ENCODE measurements at regions of chr13 and their contacts with region 1.

Region 1: DNA sequence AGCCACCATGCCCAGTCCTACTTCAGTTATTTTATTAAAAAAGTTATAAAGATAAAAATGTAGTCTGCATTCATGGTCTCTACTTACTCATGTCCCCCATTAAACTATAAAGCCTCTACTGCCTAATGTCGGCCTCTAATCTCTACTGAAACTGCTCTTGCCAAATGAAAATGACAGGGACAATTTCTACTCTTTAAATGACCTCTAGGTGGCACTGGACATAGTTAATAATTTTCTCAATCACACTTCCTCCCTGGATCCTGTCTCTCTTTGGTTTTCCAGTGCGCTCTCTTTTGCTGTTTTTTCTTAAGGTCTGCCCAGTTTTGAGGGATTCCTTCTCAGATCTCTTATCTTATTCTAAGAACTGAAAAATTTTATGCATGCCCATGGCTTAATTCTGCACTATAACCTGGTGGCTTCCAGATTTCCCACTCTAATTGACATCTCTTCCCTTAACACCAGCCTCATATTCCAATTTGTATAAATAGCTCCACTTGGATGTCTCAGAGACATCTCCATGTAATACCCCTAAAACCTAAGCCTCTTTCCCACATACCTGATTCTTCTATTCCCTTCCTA is 54.3 kb downstream of the MTMR6 start:
- DNase-seq: peak; percentile 65
- ATAC-seq: peak; percentile 73
- H3K4me3 ChIP-seq: no peak overlapping the region
- H3K27ac ChIP-seq: no peak overlapping the region
- H3K4me1 ChIP-seq: no peaks in the 10 kb centered on the region
- H3K27me3 ChIP-seq: peaks cover 14% of the 10 kb centered on the region; the same call in 1 of the 2 replicates
- CTCF ChIP-seq: peak; percentile 69

Region 2: DNA sequence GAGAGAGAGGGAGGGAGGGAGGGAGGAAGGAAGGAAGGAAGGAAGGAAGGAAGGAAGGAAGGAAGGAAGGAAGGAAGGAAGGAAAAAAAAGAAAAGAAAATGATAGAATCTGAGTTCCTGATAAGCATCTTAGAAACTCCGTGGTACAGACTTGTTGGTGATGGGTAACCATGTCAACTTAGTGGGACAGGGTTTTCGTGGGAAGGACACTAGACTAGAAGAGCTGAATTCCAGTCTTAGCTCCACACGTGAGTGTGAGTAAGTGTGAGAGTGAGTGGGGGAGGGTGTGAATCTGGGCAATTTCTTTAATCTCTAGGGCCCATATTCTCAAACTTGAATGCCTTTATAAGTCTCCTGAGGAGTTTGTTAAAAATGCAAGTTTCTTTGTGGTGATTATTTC is 102.1 kb before region 1 on chr13:
- CTCF ChIA-PET with region 1: no interaction called
- POLR2A ChIA-PET with region 1: no interaction called
- intact Hi-C with region 1: no loop called
- DNase-seq: no peak
- ATAC-seq: no peak
- H3K4me3 ChIP-seq: no peak overlapping the region
- H3K27ac ChIP-seq: no peak overlapping the region
- H3K4me1 ChIP-seq: no peaks in the 10 kb centered on the region
- H3K27me3 ChIP-seq: peaks cover 24% of the 10 kb centered on the region
- CTCF ChIP-seq: no peak

Region 3: DNA sequence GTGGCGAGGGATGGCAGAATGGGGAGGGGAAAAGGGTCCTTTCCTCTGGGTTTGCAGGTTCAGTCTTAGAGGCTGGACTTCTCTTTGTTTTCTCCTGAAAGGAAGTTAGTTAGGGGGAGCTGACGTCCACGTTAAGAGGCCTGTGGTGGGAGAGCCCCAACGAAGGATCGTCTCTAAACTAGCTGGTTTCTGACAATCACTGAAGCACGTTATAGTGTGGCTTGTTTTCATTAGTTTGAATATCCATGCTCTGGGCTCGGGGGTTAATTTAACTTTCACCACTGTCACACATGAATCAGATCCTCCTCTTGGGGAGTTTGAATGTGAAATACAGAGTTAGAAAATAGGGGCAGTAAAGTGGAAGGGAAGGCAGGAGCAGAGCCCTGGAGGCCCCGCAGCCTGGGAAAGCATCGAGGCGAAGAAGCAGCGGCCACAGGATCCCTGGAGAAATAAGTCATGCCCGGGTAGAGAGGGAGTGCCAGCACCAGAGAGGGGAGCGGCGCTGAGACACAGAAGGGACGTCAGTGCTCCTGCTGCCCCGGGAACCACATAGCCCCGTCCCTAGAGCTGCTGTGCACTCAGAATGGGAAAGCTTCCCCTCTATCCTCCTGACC is 29.8 kb before region 1 on chr13:
- CTCF ChIA-PET with region 1: no interaction called
- POLR2A ChIA-PET with region 1: no interaction called
- intact Hi-C with region 1: no loop called
- DNase-seq: no peak
- ATAC-seq: no peak
- H3K4me3 ChIP-seq: no peak overlapping the region
- H3K27ac ChIP-seq: no peak overlapping the region
- H3K4me1 ChIP-seq: no peaks in the 10 kb centered on the region
- H3K27me3 ChIP-seq: peaks cover 59% of the 10 kb centered on the region
- CTCF ChIP-seq: no peak

Region 4: DNA sequence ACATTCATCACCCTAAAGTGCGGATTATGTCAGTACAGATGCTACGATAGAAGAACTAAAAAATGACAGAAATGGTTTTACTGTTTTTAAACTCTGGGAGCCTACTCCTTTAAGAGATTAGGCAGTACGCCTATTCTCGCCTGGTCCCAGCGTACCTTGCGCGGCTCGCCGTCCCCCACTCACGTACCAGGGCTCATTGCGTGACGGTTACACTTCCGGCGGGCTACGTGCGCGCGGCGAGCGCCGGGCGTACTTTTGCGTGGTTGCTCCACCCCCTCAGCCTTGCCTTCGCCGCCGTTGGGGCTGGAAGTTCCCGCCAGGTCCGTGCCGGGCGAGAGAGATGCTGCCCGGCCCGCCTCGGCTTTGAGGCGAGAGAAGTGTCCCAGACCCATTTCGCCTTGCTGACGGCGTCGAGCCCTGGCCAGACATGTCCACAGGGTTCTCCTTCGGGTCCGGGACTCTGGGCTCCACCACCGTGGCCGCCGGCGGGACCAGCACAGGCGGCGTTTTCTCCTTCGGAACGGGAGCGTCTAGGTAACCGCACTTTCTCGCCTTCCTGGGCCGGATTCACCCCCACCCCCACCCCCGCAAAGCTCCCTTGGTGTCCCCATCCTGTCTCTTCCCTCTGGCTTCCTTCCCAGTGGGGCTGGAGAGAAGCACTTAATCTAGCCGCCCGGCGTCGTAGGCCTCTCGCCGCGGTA is 68.5 kb after region 1 on chr13 and contains the start of gene NUP58:
- CTCF ChIA-PET with region 1: no interaction called
- POLR2A ChIA-PET with region 1: no interaction called
- intact Hi-C with region 1: no loop called
- DNase-seq: peak; percentile 94
- ATAC-seq: peak; percentile 99
- H3K4me3 ChIP-seq: peak within 1 kb of the TSS; percentile 89
- H3K27ac ChIP-seq: peak within 1 kb of the TSS; percentile 45
- H3K4me1 ChIP-seq: peaks cover 11% of the 10 kb centered on the region; the same call in 1 of the 2 replicates
- H3K27me3 ChIP-seq: no peaks in the 10 kb centered on the region
- CTCF ChIP-seq: no peak
- total RNA-seq, gene NUP58: 46.1 and 63.8 TPM in 2 replicates

Region 5: DNA sequence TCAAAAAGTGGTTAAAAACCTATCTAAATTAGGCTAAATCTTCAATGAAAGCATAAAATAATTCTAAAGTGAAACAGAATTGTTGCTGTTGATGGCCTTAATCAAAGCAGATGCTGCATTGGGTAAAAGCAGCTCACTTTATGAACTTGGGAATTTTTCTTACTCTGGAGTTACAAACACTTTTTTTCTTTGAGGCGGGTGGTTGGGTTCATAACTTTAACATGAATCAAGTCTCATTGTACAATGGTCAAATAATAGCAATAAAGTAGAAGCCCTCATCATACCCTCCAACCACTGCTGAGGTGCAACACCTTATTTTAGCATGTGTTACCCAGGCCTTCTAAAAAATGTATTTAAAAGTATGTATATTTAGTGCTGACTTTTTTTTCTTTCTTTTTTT is 97.5 kb after region 1 on chr13:
- CTCF ChIA-PET with region 1: no interaction called
- POLR2A ChIA-PET with region 1: no interaction called
- intact Hi-C with region 1: no loop called
- DNase-seq: peak; percentile 8
- ATAC-seq: no peak
- H3K4me3 ChIP-seq: no peak overlapping the region
- H3K27ac ChIP-seq: no peak overlapping the region
- H3K4me1 ChIP-seq: no peaks in the 10 kb centered on the region
- H3K27me3 ChIP-seq: no peaks in the 10 kb centered on the region
- CTCF ChIP-seq: no peak

Region 6: GRCh38 chr13:25375727-25376358 is 142.8 kb after region 1 on chr13:
- CTCF ChIA-PET with region 1: no interaction called
- POLR2A ChIA-PET with region 1: no interaction called
- intact Hi-C with region 1: loop called (anchors 2 kb)
- DNase-seq: peak; percentile 63
- ATAC-seq: peak; percentile 38; the same call in 1 of the 2 replicates
- H3K4me3 ChIP-seq: no peak overlapping the region
- H3K27ac ChIP-seq: no peak overlapping the region
- H3K4me1 ChIP-seq: no peaks in the 10 kb centered on the region
- H3K27me3 ChIP-seq: peaks cover 66% of the 10 kb centered on the region
- CTCF ChIP-seq: peak; percentile 61